MCF 10A (cell line): ENCODE measurements at regions of chr1 and their contacts with region 1.

Region 1: GRCh38 chr1:160675641-160676410 is 29.0 kb upstream of the SLAMF1 start:
- DNase-seq: peak; percentile 74
- H3K4me3 Mint-ChIP-seq: no peak overlapping the region
- H3K27ac Mint-ChIP-seq: no peak overlapping the region
- H3K4me1 Mint-ChIP-seq: no peaks in the 10 kb centered on the region
- H3K27me3 Mint-ChIP-seq: peaks cover 31% of the 10 kb centered on the region
- CTCF ChIP-seq: peak; percentile 90

Region 2: GRCh38 chr1:160664573-160665051 is 11.2 kb before region 1 on chr1:
- CTCF ChIA-PET with region 1: interaction called, 39 read pairs
- POLR2A ChIA-PET with region 1: no interaction called
- intact Hi-C with region 1: no loop called
- DNase-seq: no peak
- H3K4me3 Mint-ChIP-seq: no peak overlapping the region
- H3K27ac Mint-ChIP-seq: no peak overlapping the region
- H3K4me1 Mint-ChIP-seq: no peaks in the 10 kb centered on the region
- H3K27me3 Mint-ChIP-seq: no peaks in the 10 kb centered on the region
- CTCF ChIP-seq: no peak

Region 3: GRCh38 chr1:160726498-160727315 is 50.9 kb after region 1 on chr1:
- CTCF ChIA-PET with region 1: interaction called, 44 read pairs
- POLR2A ChIA-PET with region 1: interaction called, 4 read pairs
- intact Hi-C with region 1: loop called (anchors 1 kb)
- DNase-seq: peak; percentile 90
- H3K4me3 Mint-ChIP-seq: no peak overlapping the region
- H3K27ac Mint-ChIP-seq: no peak overlapping the region
- H3K4me1 Mint-ChIP-seq: no peaks in the 10 kb centered on the region
- H3K27me3 Mint-ChIP-seq: no peaks in the 10 kb centered on the region
- CTCF ChIP-seq: peak; percentile 91

Region 4: DNA sequence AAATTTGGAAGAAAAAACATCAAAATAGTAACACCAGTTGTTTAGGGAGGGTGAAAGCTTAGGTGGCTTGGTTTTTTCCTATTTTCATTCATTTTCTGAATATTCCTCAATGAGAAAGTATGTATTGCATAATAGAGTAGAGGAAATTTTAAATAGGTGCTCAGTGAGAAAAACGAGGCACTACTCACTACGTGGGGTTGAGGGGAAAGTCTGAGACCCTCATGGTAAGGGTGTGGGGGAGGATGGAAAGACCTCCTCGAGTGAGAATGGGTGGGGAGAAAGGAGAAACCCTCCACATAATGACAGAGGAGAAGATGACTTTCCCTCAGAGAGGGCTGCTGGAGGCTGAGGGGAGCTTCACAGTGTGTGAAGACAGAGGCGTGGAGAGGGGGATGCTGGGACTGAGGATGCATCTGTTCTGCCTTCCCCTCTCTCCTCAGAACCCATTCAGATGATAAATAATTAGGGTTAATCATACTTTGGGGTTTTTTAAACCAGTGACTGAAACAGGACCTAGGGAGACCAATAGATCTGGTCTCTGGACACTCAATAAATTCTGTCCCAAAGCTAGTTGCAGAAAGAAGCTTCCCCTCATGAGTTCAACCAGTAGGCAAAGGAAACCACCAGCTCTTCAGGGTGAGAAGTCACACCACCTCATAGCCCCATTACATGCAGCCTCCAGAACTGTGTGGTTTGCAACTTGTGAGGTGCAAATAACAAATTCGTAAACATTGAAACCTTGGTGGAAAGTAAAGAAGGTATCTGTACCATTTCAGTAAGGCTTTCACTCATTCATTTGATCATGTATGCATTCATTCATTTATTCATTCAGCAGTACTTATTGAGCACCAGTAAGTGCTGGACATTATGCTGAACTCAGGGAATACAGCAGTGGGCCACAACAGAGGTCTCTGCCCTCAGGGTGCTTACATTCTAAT is 80.4 kb after region 1 on chr1:
- CTCF ChIA-PET with region 1: no interaction called
- POLR2A ChIA-PET with region 1: no interaction called
- intact Hi-C with region 1: no loop called
- DNase-seq: no peak
- H3K4me3 Mint-ChIP-seq: no peak overlapping the region
- H3K27ac Mint-ChIP-seq: no peak overlapping the region
- H3K4me1 Mint-ChIP-seq: no peaks in the 10 kb centered on the region
- H3K27me3 Mint-ChIP-seq: no peaks in the 10 kb centered on the region
- CTCF ChIP-seq: no peak

Region 5: DNA sequence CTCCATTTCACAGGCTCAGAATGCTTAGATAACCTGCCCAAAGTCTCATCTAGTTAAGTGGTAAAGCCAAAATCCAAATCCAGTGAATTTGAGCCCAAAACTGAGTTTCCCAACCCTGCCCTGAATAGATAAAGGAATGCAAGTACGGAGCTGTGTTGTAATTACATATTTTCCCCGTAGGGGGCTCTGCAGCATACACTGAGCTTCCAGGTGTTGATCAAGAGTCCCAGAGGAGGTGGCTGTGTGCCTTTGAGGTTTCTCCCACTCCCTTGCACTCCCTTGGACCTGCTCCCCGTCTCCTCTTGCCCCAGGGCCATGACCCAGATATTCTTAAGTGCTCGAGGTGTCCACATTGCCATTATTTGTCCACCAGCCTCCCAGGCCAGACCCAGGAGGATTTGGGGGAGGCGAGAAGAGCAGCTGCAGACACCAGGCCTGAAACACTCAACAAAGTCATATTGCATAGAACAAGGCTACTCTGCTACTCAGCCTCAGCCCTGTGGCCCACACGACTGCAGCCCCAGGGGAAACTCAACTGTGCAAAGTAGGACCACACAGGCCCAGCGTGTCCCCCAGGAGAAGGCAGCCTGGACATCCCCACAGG is 101.8 kb after region 1 on chr1:
- CTCF ChIA-PET with region 1: interaction called, 6 read pairs
- POLR2A ChIA-PET with region 1: no interaction called
- intact Hi-C with region 1: loop called (anchors 2 kb)
- DNase-seq: peak; percentile 71
- H3K4me3 Mint-ChIP-seq: no peak overlapping the region
- H3K27ac Mint-ChIP-seq: no peak overlapping the region
- H3K4me1 Mint-ChIP-seq: no peaks in the 10 kb centered on the region
- H3K27me3 Mint-ChIP-seq: no peaks in the 10 kb centered on the region
- CTCF ChIP-seq: peak; percentile 85

Region 6: DNA sequence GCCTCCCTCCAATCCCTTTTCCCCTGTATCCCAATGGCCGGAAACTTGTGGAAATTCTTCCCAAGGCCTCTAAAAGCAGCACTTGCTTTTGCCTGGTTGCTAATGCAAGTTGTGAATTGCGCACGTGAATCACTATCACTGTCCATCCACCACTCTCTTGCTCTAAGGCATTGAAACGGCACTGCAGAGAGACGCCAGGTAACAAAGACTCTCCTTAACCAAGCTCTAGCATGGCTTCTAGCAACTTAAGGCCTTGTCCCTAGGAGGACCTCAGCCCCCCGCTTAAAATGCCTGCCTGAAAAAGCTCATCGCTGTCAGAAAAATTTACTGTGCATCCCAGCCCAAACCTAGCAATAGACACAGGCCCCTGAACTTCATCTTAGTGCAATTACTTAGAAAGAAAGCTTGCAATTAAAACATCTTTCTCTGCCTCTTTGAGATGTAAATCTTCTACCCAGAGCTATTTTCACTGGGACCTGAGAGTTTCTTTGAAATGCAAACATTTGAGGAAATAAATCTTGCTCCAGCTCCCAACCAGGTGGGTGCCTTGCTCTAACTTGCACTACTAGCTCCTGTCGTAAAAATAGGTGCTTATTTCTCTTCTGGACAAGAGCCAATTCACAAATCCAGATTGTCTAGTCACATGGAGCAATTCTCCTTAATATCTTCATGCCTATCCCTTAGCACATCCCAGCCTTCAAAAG is 311.7 kb after region 1 on chr1:
- CTCF ChIA-PET with region 1: interaction called, 10 read pairs
- POLR2A ChIA-PET with region 1: interaction called, 3 read pairs
- intact Hi-C with region 1: loop called (anchors 1 kb)
- DNase-seq: no peak
- H3K4me3 Mint-ChIP-seq: no peak overlapping the region
- H3K27ac Mint-ChIP-seq: no peak overlapping the region
- H3K4me1 Mint-ChIP-seq: no peaks in the 10 kb centered on the region
- H3K27me3 Mint-ChIP-seq: no peaks in the 10 kb centered on the region
- CTCF ChIP-seq: no peak

Region 7: GRCh38 chr1:161117759-161118581 is 442.1 kb after region 1 on chr1 and contains the starts of genes NIT1 and PFDN2:
- CTCF ChIA-PET with region 1: no interaction called
- POLR2A ChIA-PET with region 1: no interaction called
- intact Hi-C with region 1: no loop called
- DNase-seq: peak; percentile 85
- H3K4me3 Mint-ChIP-seq: peak within 1 kb of the TSS; percentile 97
- H3K27ac Mint-ChIP-seq: peak within 1 kb of the TSS; percentile 95
- H3K4me1 Mint-ChIP-seq: peaks cover 50% of the 10 kb centered on the region
- H3K27me3 Mint-ChIP-seq: no peaks in the 10 kb centered on the region
- CTCF ChIP-seq: no peak
- total RNA-seq, gene NIT1: 73.4 and 75.4 TPM in 2 replicates
- total RNA-seq, gene PFDN2: 514 and 683 TPM in 2 replicates